Activated T-helper 1 cell treated with anti-CD3 and anti-CD28 coated beads, Interleukin-12 subunit alpha, Interleukin-12 subunit beta, Interleukin-2, Interleukin-4 antibody, amounts not matched to agents 30 ng/mL and 10 ng/mL and 1 ng/mL, durations not matched to agents 14 hours and 24 hours and 36 hours (primary cell): ENCODE measurements at regions of chr17 and their contacts with region 1.

Region 1: GRCh38 chr17:35359398-35359797 is 14.0 kb downstream of the SLFN11 start:
- DNase-seq: no peak
- H3K4me3 Mint-ChIP-seq: no peak overlapping the region
- H3K27ac Mint-ChIP-seq: no peak overlapping the region
- H3K4me1 Mint-ChIP-seq: peaks cover 64% of the 10 kb centered on the region
- H3K27me3 Mint-ChIP-seq: no peaks in the 10 kb centered on the region

Region 2: GRCh38 chr17:34998205-34998604 is 361.2 kb before region 1 on chr17:
- intact Hi-C with region 1: no loop called
- DNase-seq: peak; percentile 77
- H3K4me3 Mint-ChIP-seq: no peak overlapping the region
- H3K27ac Mint-ChIP-seq: peak overlapping the region; percentile 11
- H3K4me1 Mint-ChIP-seq: peaks cover 21% of the 10 kb centered on the region
- H3K27me3 Mint-ChIP-seq: no peaks in the 10 kb centered on the region

Region 3: GRCh38 chr17:35170968-35171771 is 188.2 kb before region 1 on chr17:
- intact Hi-C with region 1: loop called (anchors 5 kb)
- DNase-seq: peak; percentile 15
- H3K4me3 Mint-ChIP-seq: peak overlapping the region; percentile 5
- H3K27ac Mint-ChIP-seq: no peak overlapping the region
- H3K4me1 Mint-ChIP-seq: peaks cover 35% of the 10 kb centered on the region
- H3K27me3 Mint-ChIP-seq: peaks cover 7% of the 10 kb centered on the region

Region 4: GRCh38 chr17:35498448-35499178 is 139.2 kb after region 1 on chr17:
- intact Hi-C with region 1: no loop called
- DNase-seq: no peak
- H3K4me3 Mint-ChIP-seq: no peak overlapping the region
- H3K27ac Mint-ChIP-seq: no peak overlapping the region
- H3K4me1 Mint-ChIP-seq: peaks cover 67% of the 10 kb centered on the region
- H3K27me3 Mint-ChIP-seq: no peaks in the 10 kb centered on the region